WTC11 (cell line): ENCODE measurements at regions of chr2 and their contacts with region 1.

Region 1: DNA sequence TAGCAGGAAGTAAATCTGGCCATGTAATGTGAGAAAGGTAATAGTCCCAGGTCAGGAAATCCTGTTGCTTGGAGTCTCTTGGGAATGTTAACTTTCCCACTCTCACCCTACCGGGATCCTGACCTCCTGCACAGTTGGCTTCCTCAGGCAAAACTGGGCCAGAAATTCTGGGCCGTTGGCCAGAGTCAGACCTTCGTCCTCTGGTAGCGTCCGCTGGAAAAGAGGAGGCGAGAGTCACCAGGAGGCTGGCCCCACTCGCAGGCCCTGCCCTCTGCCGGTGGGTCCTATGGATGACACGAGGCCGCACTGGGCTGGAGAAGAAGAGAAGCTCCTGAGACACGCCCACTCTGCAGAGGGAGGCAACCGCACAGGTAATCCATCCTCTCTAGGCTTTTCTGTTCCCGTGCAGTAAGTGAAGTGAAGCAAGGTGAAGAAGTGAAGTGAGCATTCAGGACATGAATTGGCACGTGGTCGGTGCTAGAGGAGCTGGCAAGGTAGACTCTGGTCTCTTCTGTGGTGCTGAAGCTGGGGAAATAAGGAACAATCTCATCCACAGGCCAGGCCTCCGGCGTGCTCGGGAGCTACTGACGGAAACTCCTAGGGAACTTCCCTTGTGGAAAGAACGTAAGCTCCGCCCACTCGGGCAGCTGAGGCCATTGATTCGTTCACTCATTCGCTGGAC is 182.7 kb upstream of the GLI2 start:
- DNase-seq: peak; percentile 94
- ATAC-seq: peak; percentile 100
- H3K4me3 Mint-ChIP-seq: peak overlapping the region; percentile 62
- H3K27ac Mint-ChIP-seq: no peak overlapping the region
- H3K4me1 Mint-ChIP-seq: peaks cover 11% of the 10 kb centered on the region
- H3K27me3 Mint-ChIP-seq: peaks cover 59% of the 10 kb centered on the region
- CTCF ChIP-seq: peak; percentile 76

Region 2: DNA sequence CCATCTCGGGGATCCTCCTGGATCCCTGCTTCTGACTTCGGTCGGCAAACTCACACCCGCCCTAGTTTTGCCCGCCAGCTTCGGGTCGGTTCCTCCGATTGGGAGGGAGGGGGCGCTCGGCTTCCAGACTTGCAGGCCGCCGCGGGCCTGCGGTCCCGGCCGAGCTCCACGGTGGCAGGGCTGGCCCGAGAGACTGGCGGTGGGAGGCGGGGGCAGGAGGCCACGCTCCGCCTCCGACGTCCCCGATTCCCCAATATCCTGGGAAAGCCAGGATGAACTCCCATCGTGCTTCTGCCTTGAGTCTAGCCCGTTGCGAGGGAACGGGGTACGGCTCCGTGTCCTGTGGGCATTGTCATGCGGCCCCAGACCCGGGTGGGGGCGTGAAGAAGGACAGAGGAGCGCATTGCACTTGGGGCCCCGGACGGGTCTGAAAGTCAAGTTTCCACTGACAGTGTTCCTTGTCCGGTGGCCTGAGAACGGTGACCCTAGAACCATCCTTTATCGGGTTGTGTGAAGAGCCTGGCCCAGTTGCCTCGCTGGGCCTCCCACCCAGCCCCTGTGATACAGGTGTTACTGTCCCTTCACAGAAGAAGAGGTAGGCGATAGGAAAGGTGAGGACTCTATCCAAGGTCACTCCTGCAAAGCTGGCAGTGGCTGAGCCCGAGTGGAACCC is 209.4 kb before region 1 on chr2:
- CTCF ChIA-PET with region 1: interaction called, 29 read pairs
- POLR2A ChIA-PET with region 1: no interaction called
- DNase-seq: peak; percentile 90
- ATAC-seq: peak; percentile 78
- H3K4me3 Mint-ChIP-seq: peak overlapping the region; percentile 53
- H3K27ac Mint-ChIP-seq: no peak overlapping the region
- H3K4me1 Mint-ChIP-seq: peaks cover 31% of the 10 kb centered on the region
- H3K27me3 Mint-ChIP-seq: peaks cover 79% of the 10 kb centered on the region
- CTCF ChIP-seq: peak; percentile 61

Region 3: GRCh38 chr2:120508567-120509041 is 44.3 kb before region 1 on chr2:
- CTCF ChIA-PET with region 1: interaction called, 18 read pairs
- POLR2A ChIA-PET with region 1: no interaction called
- DNase-seq: no peak
- ATAC-seq: no peak
- H3K4me3 Mint-ChIP-seq: no peak overlapping the region
- H3K27ac Mint-ChIP-seq: no peak overlapping the region
- H3K4me1 Mint-ChIP-seq: peaks cover 4% of the 10 kb centered on the region; the same call in 1 of the 2 replicates
- H3K27me3 Mint-ChIP-seq: peaks cover 12% of the 10 kb centered on the region
- CTCF ChIP-seq: no peak

Region 4: GRCh38 chr2:120566331-120567035 is 13.5 kb after region 1 on chr2:
- CTCF ChIA-PET with region 1: interaction called, 26 read pairs
- POLR2A ChIA-PET with region 1: no interaction called
- DNase-seq: no peak
- ATAC-seq: no peak
- H3K4me3 Mint-ChIP-seq: no peak overlapping the region
- H3K27ac Mint-ChIP-seq: no peak overlapping the region
- H3K4me1 Mint-ChIP-seq: peaks cover 7% of the 10 kb centered on the region
- H3K27me3 Mint-ChIP-seq: peaks cover 2% of the 10 kb centered on the region; the same call in 1 of the 2 replicates
- CTCF ChIP-seq: no peak

Region 5: GRCh38 chr2:120589771-120590608 is 37.0 kb after region 1 on chr2:
- CTCF ChIA-PET with region 1: interaction called, 26 read pairs
- POLR2A ChIA-PET with region 1: no interaction called
- DNase-seq: no peak
- ATAC-seq: no peak
- H3K4me3 Mint-ChIP-seq: no peak overlapping the region
- H3K27ac Mint-ChIP-seq: no peak overlapping the region
- H3K4me1 Mint-ChIP-seq: peaks cover 53% of the 10 kb centered on the region
- H3K27me3 Mint-ChIP-seq: peaks cover 74% of the 10 kb centered on the region
- CTCF ChIP-seq: no peak

Region 6: DNA sequence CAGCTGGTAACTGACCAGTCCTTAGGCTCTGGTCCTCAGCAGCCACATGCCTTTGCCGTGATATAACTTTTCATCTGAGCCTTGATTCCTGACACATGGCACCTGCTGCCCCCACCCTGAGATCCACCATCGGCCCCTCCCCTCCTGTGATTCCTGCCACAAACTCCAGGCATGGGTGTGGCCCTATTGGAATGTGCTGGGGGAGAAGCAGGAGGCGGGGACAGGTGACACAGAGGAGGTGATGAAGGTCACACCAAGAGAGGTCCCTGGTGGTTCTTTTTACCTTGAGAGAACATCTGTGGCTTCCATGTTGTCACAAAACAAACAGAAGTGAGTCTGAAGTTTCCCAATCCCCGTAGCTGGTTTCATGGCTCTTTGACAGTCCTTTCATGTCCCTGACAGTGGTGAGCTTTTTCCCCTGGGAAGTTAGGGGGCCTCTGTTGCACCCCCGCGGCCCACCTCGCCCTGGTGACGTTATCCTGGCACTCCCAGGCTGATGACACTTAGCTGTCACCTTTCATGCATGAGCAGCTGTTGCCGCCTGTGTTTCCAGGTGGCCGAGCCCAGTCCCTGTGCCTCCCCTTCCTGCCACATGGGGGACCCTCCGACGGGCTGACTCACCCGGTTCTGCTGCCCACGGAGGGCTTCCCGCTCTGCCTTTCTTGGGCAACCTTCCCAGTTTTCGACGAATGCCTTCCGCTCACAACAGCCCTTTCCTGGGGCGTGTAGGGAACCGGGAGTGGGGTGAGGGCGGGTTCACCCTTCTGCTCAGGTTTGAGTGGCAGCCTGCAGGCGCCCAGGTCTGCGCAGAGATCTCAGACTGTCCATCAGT is 116.4 kb after region 1 on chr2:
- CTCF ChIA-PET with region 1: interaction called, 22 read pairs
- POLR2A ChIA-PET with region 1: interaction called, 5 read pairs
- DNase-seq: peak; percentile 75
- ATAC-seq: peak; percentile 94
- H3K4me3 Mint-ChIP-seq: no peak overlapping the region
- H3K27ac Mint-ChIP-seq: no peak overlapping the region
- H3K4me1 Mint-ChIP-seq: 0 out of 2 replicates have a peak, but pooled peaks cover 3% of the 10 kb centered on the region
- H3K27me3 Mint-ChIP-seq: peaks cover 67% of the 10 kb centered on the region
- CTCF ChIP-seq: peak; percentile 46; the same call in 1 of the 2 replicates

Region 7: DNA sequence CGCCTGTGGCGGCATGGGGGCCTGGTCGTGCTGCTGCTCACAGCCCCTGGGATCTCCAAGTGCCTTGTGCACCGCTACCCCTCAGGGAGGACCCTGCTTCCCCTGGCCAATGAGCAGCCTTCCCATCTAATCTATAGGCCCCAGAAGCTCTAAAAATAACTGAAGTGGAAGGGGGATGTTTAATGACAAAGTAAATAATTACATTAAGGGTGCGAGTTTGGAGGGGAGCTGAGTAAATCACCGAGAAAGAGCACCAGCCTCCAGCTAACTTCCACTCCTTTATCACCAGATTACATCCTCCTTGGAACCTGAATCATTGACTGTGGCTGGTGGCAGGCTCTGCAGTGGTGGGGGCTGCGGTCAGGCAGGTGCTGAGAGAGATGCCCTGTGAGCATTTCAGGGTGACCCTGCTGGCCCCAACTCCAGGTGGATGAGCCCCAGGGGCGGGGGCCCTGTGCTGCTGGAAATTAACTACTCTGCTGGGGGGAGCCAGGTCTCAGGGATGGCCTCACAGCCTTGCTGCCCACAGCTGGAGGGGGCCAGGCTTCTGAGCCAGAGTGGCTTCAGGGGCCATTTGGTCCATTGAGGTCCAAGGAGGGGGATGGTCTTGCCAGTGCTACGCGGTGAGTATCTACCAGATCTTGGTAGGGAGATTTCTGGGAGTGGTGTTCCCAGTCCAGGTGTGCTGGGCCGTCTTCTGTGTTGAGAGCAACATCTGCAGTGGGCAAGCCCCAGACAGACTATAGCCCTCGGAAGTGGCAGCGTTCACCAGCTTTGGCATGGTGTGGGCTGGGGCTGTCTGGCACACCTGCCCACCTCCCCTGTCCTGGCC is 256.9 kb after region 1 on chr2:
- CTCF ChIA-PET with region 1: no interaction called
- POLR2A ChIA-PET with region 1: no interaction called
- DNase-seq: no peak
- ATAC-seq: peak; percentile 16; the same call in 1 of the 2 replicates
- H3K4me3 Mint-ChIP-seq: no peak overlapping the region
- H3K27ac Mint-ChIP-seq: no peak overlapping the region
- H3K4me1 Mint-ChIP-seq: peaks cover 16% of the 10 kb centered on the region
- H3K27me3 Mint-ChIP-seq: no peaks in the 10 kb centered on the region
- CTCF ChIP-seq: no peak